ENCODE measurements at regions of chr2 and their contacts with region 1.

Region 1: DNA sequence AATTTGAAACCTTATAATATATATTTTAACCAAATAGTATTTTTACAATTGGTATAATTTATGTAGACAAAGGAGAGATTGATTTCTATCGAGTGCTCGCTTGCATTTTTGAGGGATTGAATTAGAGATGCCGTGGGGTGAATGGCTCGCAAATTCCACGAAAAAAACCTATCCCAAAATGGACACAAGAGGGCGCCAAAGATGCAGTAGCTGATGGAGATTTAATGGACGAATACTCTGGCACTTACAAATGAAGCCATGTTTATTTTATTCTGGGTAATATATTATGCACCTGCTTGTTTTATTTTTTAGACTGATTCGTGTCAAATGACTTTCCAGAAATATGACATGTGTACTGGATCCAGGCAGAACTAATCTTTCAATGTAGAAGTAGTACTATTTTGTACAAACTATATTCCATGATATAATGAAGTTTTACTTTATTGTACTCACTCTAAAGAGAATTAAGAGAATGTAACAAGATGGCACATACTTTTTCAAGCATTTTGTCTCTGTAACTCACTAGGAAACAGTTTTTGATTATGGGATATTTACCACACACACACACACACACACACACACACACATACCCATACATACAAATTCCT is 505.4 kb downstream of the PLCL1 start:
- DNase-seq: peak; percentile 77

Region 2: GRCh38 chr2:197904446-197904845 is 405.3 kb before region 1 on chr2:
- in situ Hi-C with region 1: no loop called
- DNase-seq: peak; percentile 33

Region 3: DNA sequence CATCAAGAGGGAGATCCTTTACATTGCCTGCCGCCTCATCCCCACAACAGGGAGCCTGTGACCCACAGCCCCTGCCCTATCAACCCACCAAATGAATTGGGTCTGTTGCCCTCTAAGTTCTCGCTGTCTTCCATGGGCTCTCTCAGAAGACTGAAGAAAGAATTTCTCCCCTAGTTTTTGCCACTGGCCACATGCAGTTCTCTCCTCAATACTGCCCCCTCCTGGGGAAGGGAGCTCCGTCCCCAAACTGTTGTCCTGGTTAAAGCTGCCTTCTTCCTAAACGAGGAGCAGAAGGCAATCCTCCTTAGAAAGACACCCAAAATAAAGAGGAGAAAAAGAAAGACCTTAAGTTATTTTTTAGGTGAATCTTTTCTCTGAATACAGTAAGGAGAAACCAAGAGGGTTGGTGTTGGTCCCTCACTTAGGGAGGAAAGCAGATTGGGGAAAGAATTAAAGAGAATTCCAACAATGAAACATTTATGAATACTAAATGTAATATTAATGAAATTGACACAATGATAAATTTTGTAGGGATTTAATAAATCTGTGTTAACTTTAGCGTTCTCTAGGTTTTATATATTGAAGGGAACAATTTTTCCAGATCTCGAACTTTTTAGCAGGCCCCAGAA is 1179.1 kb after region 1 on chr2:
- in situ Hi-C with region 1: loop called (anchors 25 kb)
- DNase-seq: peak; percentile 83

Measured in KBM-7 (cell line).